Testis (tissue), 5 donors: ENCODE measurements at regions of chr1 and their contacts with region 1.

Region 1: DNA sequence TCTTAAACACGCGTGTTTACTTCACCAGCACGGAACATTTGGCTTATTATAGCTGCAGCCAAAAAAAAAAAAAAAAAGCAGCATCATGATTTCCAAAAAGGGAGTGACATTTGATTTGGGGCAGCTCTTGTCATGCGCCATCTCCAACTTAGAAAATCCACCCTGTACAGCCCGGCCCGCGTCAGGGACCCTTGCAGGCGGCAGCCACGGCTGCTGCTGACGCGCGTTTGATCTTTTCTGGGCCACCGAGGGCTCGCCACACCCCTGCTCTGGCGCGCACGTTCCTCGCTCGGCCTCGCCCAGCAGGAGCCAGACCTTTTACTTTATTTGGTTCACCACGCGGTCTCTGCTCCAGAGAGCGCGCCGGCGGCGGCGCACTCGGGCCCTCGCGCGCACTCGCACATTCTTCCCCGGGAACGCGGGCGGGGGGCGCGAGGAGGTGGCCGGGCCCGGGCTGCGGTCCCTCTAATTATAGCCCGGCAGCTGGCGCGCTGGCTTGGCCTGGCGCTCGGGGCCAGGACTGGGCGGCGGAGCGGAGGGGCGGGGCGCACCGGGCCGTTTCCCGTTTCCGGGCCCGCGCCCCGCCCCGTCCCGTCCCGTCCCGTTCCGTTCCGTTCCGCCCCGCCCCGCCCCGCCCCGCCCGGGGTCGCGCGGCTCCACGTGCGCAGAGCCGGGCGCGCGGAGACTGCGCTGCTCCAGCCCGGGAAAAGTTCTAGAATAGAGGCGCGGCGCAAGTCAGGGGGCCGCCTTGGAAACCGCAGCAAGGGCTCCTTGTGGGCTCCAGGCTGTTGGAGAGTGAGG is 10.2 kb downstream of the IRF2BP2 start:
- DNase-seq: peak; percentile 83
- H3K4me3 ChIP-seq: peak overlapping the region; percentile 63 to 65
- H3K27ac ChIP-seq: peak overlapping the region; percentile 96 to 100
- H3K4me1 ChIP-seq: peaks cover 46% of the 10 kb centered on the region
- H3K27me3 ChIP-seq: no peaks in the 10 kb centered on the region
- CTCF ChIP-seq: no peak
- POLR2A ChIP-seq: peak; percentile 18

Region 2: GRCh38 chr1:234533975-234534876 is 65.6 kb before region 1 on chr1:
- intact Hi-C with region 1: loop called (anchors 5 kb)
- DNase-seq: peak; percentile 99
- H3K4me3 ChIP-seq: no peak overlapping the region
- H3K27ac ChIP-seq: peak overlapping the region; percentile 95 to 98
- H3K4me1 ChIP-seq: peaks cover 71% of the 10 kb centered on the region
- H3K27me3 ChIP-seq: no peaks in the 10 kb centered on the region
- CTCF ChIP-seq: no peak
- POLR2A ChIP-seq: no peak